Mammary epithelial cell (primary cell): ENCODE measurements at regions of chr15 and their contacts with region 1.

Region 1: GRCh38 chr15:40513609-40514008 is 42.8 kb downstream of the CHST14 start:
- DNase-seq: no peak
- H3K4me3 ChIP-seq: no peak overlapping the region
- H3K27ac ChIP-seq: no peak overlapping the region
- H3K4me1 ChIP-seq: peaks cover 18% of the 10 kb centered on the region
- H3K27me3 ChIP-seq: no peaks in the 10 kb centered on the region
- CTCF ChIP-seq: no peak

Region 2: DNA sequence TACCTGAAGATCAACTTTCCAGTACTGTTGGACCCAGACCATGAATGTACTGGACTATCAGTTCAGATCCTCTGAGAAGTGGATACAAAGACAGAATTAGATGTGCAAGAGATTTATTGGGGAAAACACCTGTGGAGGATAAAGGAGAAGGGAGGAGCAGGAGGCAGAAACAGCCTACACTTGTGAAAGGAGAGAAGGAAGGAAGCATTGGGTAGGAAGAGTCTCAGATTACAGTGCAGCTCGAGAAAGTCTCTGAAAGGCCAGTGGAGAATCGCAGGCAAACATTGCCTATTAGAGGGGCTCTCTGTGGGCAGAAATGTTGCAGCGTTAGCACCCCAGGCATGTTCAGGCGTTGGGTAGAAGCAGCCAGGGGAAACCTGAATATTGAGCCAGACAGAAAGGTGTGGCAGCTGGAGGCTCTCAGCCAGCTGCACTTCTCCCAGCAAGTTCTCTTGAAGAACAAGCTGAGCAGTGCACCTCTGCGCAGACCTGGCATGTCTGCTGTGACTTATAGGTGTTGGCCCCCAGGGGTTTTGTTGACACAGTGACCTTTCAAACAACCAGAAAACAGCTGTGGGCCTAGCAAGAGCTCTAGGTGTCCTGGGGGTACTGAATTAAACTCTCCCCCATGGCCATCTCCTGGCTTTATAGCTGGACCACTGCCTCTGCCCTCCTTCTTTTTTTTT is 35.8 kb before region 1 on chr15:
- CTCF ChIA-PET with region 1: no interaction called
- dilution Hi-C with region 1: no loop called
- in situ Hi-C with region 1: no loop called
- intact Hi-C with region 1: no loop called
- DNase-seq: no peak
- H3K4me3 ChIP-seq: no peak overlapping the region
- H3K27ac ChIP-seq: no peak overlapping the region
- H3K4me1 ChIP-seq: no peaks in the 10 kb centered on the region
- H3K27me3 ChIP-seq: no peaks in the 10 kb centered on the region
- CTCF ChIP-seq: no peak

Region 3: GRCh38 chr15:40593588-40594428 is 80.2 kb after region 1 on chr15 and contains the start of gene KNL1:
- CTCF ChIA-PET with region 1: no interaction called
- dilution Hi-C with region 1: no loop called
- in situ Hi-C with region 1: no loop called
- intact Hi-C with region 1: loop called (anchors 2 kb)
- DNase-seq: peak; percentile 93
- H3K4me3 ChIP-seq: peak within 1 kb of the TSS; percentile 70 to 80 (median 76)
- H3K27ac ChIP-seq: peak within 1 kb of the TSS; percentile 88
- H3K4me1 ChIP-seq: peaks cover 11% of the 10 kb centered on the region
- H3K27me3 ChIP-seq: no peaks in the 10 kb centered on the region
- CTCF ChIP-seq: no peak
- total RNA-seq, gene KNL1: 1.8 to 21.3 TPM